IMR-90 (cell line): ENCODE measurements at regions of chrX and their contacts with region 1.

Region 1: DNA sequence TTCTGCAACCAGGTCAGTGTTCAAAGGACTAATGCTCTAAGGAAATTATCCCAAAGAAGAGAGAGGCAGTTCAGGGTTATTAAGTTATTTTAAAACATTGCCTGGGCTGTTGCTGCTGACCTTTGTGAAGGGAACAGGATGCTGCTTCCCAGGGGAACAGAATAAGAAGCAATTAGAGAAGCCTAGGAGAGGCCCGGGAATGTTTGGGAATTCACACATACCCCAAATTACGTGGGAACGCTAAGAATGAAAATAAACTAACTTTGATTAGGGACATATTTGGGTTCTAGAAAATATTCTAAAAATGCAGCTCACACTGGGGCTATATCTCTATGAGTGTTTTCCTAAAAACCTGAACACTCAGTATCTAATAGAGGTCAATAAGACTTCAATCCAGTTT is 243.1 kb upstream of the FTHL17 start:
- DNase-seq: peak; percentile 52
- ATAC-seq: peak; percentile 73
- H3K4me3 ChIP-seq: no peak overlapping the region
- H3K27ac ChIP-seq: peak overlapping the region; percentile 49; the same call in 1 of the 2 replicates
- H3K4me1 ChIP-seq: no peaks in the 10 kb centered on the region; the same call in 1 of the 2 replicates
- H3K27me3 ChIP-seq: no peaks in the 10 kb centered on the region
- CTCF ChIP-seq: no peak
- POLR2A ChIP-seq: no peak
- RAD21 ChIP-seq: no peak

Region 2: DNA sequence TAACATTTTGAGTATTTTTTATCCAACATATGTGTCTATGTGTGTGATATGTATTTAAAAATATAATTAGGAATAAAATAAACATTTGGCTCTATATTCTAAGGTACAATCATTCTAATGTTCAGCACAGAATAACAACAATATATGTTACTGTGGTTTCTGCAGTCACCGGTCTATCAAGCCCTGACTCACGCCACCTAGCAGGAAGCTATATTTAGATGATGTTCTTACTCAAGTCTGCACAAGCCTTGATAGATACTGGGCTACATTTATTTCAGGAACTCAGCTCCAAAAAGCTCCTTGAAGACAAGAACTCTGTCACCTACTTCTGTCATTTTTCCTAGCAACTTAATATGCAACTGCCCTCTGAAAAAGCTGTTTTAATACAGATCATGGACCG is 91.1 kb before region 1 on chrX:
- CTCF ChIA-PET with region 1: no interaction called
- POLR2A ChIA-PET with region 1: no interaction called
- dilution Hi-C with region 1: no loop called
- in situ Hi-C with region 1: no loop called
- intact Hi-C with region 1: loop called (anchors 5 kb)
- DNase-seq: peak; percentile 80
- ATAC-seq: peak; percentile 31; the same call in 1 of the 2 replicates
- H3K4me3 ChIP-seq: no peak overlapping the region
- H3K27ac ChIP-seq: no peak overlapping the region
- H3K4me1 ChIP-seq: peaks cover 4% of the 10 kb centered on the region
- H3K27me3 ChIP-seq: no peaks in the 10 kb centered on the region
- CTCF ChIP-seq: no peak
- POLR2A ChIP-seq: no peak
- RAD21 ChIP-seq: no peak

Region 3: GRCh38 chrX:31604629-31605221 is 289.8 kb after region 1 on chrX:
- CTCF ChIA-PET with region 1: no interaction called
- POLR2A ChIA-PET with region 1: no interaction called
- dilution Hi-C with region 1: no loop called
- in situ Hi-C with region 1: no loop called
- intact Hi-C with region 1: no loop called
- DNase-seq: no peak
- ATAC-seq: no peak
- H3K4me3 ChIP-seq: no peak overlapping the region
- H3K27ac ChIP-seq: no peak overlapping the region
- H3K4me1 ChIP-seq: peaks cover 3% of the 10 kb centered on the region; the same call in 1 of the 2 replicates
- H3K27me3 ChIP-seq: no peaks in the 10 kb centered on the region
- CTCF ChIP-seq: no peak
- POLR2A ChIP-seq: no peak
- RAD21 ChIP-seq: no peak